Vagina (tissue), 2 donors: ENCODE measurements at regions of chr1 and their contacts with region 1.

Region 1: GRCh38 chr1:15803354-15803753 is 4.1 kb downstream of the UQCRHL start:
- DNase-seq: no peak
- H3K4me3 ChIP-seq: no peak overlapping the region
- H3K27ac ChIP-seq: no peak overlapping the region
- H3K4me1 ChIP-seq: peaks cover 26% of the 10 kb centered on the region
- H3K27me3 ChIP-seq: no peaks in the 10 kb centered on the region
- CTCF ChIP-seq: peak in 1 of 3 experiments; percentile 22
- POLR2A ChIP-seq: no peak

Region 2: DNA sequence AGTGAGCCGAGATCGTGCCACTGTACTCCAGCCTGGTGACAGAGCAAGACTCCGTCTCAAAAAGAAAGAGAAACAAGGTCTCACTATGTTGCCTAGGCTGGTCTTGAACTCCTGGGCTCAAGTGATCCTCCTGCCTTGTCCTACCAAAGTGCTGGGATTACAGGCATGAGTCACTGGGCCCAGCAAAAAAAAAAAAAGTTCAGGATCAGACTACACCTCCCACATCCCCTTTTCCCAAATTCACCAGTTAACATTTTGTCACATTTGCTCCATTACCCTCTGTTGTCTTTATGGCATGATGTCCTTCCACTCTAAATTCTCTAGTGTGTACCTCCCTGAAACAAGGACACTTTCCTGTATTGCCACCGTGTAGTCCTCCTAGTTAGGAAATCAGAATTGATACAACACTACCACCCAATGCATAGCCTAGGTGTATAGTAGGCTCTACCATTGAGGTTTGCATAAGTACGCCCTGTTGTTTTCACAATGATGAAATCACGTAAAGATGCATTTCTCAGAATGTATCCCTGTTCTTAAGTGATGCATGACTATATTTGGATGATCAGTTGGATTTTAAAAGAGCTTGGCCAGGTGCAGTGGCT is 54.8 kb after region 1 on chr1:
- intact Hi-C with region 1: loop called (anchors 2 kb)
- DNase-seq: no peak
- H3K4me3 ChIP-seq: no peak overlapping the region
- H3K27ac ChIP-seq: no peak overlapping the region
- H3K4me1 ChIP-seq: peaks cover 60% of the 10 kb centered on the region
- H3K27me3 ChIP-seq: no peaks in the 10 kb centered on the region
- CTCF ChIP-seq: no peak
- POLR2A ChIP-seq: no peak